HAP-1 (cell line): ENCODE measurements at regions of chr12 and their contacts with region 1.

Region 1: GRCh38 chr12:21697904-21698630 is 40.4 kb upstream of the LDHB start:
- DNase-seq: no peak
- H3K4me3 ChIP-seq: no peak overlapping the region
- H3K4me1 ChIP-seq: no peaks in the 10 kb centered on the region
- H3K27me3 ChIP-seq: peaks cover 9% of the 10 kb centered on the region

Region 2: GRCh38 chr12:21324551-21324950 is 373.5 kb before region 1 on chr12:
- in situ Hi-C with region 1: loop called (anchors 25 kb)
- DNase-seq: peak; percentile 24 to 81
- H3K4me3 ChIP-seq: no peak overlapping the region
- H3K4me1 ChIP-seq: peaks cover 11% of the 10 kb centered on the region
- H3K27me3 ChIP-seq: no peaks in the 10 kb centered on the region

Region 3: GRCh38 chr12:22215467-22216253 is 517.6 kb after region 1 on chr12:
- in situ Hi-C with region 1: no loop called
- DNase-seq: no peak
- H3K4me3 ChIP-seq: no peak overlapping the region
- H3K4me1 ChIP-seq: no peaks in the 10 kb centered on the region
- H3K27me3 ChIP-seq: no peaks in the 10 kb centered on the region

Region 4: GRCh38 chr12:22443379-22444316 is 745.6 kb after region 1 on chr12:
- in situ Hi-C with region 1: loop called (anchors 25 kb)
- DNase-seq: peak; percentile 66 to 72
- H3K4me3 ChIP-seq: no peak overlapping the region
- H3K4me1 ChIP-seq: no peaks in the 10 kb centered on the region
- H3K27me3 ChIP-seq: peaks cover 6% of the 10 kb centered on the region

Region 5: GRCh38 chr12:22544038-22544979 is 846.2 kb after region 1 on chr12 and contains the start of gene C2CD5:
- in situ Hi-C with region 1: no loop called
- DNase-seq: peak; percentile 92 to 98
- H3K4me3 ChIP-seq: peak within 1 kb of the TSS; percentile 86
- H3K4me1 ChIP-seq: peaks cover 8% of the 10 kb centered on the region
- H3K27me3 ChIP-seq: no peaks in the 10 kb centered on the region